ENCODE measurements at regions of chr10 and their contacts with region 1.

Region 1: GRCh38 chr10:84499846-84500245 is 171.5 kb downstream of the CCSER2 start:
- DNase-seq: no peak
- H3K4me3 Mint-ChIP-seq: no peak overlapping the region
- H3K27ac Mint-ChIP-seq: no peak overlapping the region
- H3K4me1 Mint-ChIP-seq: peaks cover 4% of the 10 kb centered on the region
- H3K27me3 Mint-ChIP-seq: no peaks in the 10 kb centered on the region

Region 2: DNA sequence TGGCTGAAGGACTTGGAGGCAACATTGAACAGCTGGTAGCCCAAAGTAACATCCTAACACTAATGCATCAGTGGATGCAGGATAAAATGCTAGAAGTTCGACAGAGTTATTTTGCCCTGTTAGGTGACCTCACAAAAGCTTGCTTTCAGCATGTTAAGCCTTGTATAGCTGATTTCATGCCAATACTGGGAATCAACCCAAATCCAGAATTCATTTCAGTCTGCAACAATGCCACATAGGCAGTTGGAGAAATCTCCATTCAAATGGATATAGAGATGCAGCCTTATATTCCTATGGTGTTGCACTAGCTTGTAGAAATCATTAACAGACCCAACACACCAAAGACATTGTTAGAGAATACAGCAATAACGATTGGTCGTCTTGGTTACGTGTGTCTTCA is 108.5 kb before region 1 on chr10:
- CTCF ChIA-PET with region 1: no interaction called
- POLR2A ChIA-PET with region 1: no interaction called
- intact Hi-C with region 1: no loop called
- DNase-seq: no peak
- H3K4me3 Mint-ChIP-seq: no peak overlapping the region
- H3K27ac Mint-ChIP-seq: no peak overlapping the region
- H3K4me1 Mint-ChIP-seq: peaks cover 46% of the 10 kb centered on the region
- H3K27me3 Mint-ChIP-seq: no peaks in the 10 kb centered on the region

Region 3: DNA sequence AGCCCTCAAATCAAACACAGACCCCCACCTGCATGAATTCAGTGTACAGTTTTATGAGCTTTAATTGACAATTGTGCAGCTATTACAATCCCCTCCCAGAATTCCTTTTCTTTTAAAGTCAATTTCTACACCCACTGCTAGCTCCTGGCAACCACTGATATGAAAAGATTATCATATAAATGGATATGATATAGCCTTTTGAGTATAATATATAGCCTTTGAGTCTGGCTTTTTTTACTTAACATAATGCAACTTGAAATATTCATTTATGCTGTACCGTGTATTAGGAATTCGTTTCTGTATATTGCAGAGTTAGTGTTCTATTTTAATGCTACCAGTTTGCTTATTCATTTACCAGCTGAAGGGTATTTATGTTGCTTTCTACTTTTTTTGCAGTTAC is 43.7 kb before region 1 on chr10:
- CTCF ChIA-PET with region 1: no interaction called
- POLR2A ChIA-PET with region 1: no interaction called
- intact Hi-C with region 1: loop called (anchors 5 kb)
- DNase-seq: no peak
- H3K4me3 Mint-ChIP-seq: no peak overlapping the region
- H3K27ac Mint-ChIP-seq: no peak overlapping the region
- H3K4me1 Mint-ChIP-seq: peaks cover 9% of the 10 kb centered on the region
- H3K27me3 Mint-ChIP-seq: no peaks in the 10 kb centered on the region